ENCODE measurements at regions of chr11 and their contacts with region 1.

Region 1: GRCh38 chr11:122668562-122669090 is 13.1 kb downstream of the UBASH3B start:
- DNase-seq: peak; percentile 83
- H3K4me3 ChIP-seq: no peak overlapping the region
- H3K27ac ChIP-seq: no peak overlapping the region
- H3K4me1 ChIP-seq: peaks cover 16% of the 10 kb centered on the region
- H3K27me3 ChIP-seq: no peaks in the 10 kb centered on the region
- CTCF ChIP-seq: no peak

Region 2: GRCh38 chr11:122655527-122656072 is 13.0 kb before region 1 on chr11 and contains the start of gene UBASH3B:
- CTCF ChIA-PET with region 1: no interaction called
- POLR2A ChIA-PET with region 1: no interaction called
- intact Hi-C with region 1: no loop called
- DNase-seq: peak; percentile 91
- H3K4me3 ChIP-seq: peak within 1 kb of the TSS; percentile 95
- H3K27ac ChIP-seq: peak within 1 kb of the TSS; percentile 75
- H3K4me1 ChIP-seq: peaks cover 13% of the 10 kb centered on the region
- H3K27me3 ChIP-seq: no peaks in the 10 kb centered on the region
- CTCF ChIP-seq: 0 out of 2 replicates have a peak, but pooled peaks have one; percentile 19
- total RNA-seq, gene UBASH3B: 15.0 and 15.3 TPM in 2 replicates

Region 3: DNA sequence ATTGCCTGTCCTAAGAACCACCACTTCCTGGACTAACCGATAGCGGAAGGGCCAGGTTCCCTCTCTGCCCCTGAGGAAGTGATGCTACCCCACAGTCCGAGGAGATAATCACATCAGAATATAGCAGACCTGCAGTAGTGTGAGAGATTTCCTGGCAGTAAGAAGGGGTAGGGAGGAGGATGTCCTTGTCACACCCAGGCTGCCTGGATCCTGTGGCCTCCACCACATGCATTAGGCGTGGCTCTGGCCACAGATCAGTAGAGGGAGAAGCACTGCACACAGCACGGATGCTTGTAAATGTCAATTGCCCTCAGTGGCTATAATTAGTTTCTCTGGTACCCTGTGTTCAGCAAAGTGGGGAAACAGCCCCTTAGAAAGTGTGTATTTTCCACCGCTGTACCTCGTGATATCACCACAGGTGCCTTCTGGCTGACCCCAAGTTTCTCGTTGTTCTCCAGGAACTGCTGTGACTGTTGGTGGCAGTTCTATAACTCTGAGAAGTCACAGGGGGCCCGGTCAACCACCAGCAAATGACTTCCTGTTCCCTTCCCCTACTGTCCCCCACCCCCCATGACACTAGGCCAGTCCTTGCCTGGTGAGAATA is 48.7 kb after region 1 on chr11:
- CTCF ChIA-PET with region 1: no interaction called
- POLR2A ChIA-PET with region 1: no interaction called
- intact Hi-C with region 1: no loop called
- DNase-seq: no peak
- H3K4me3 ChIP-seq: no peak overlapping the region
- H3K27ac ChIP-seq: no peak overlapping the region
- H3K4me1 ChIP-seq: peaks cover 21% of the 10 kb centered on the region
- H3K27me3 ChIP-seq: no peaks in the 10 kb centered on the region
- CTCF ChIP-seq: no peak

Region 4: GRCh38 chr11:123062158-123062891 is 393.7 kb after region 1 on chr11:
- CTCF ChIA-PET with region 1: interaction called, 13 read pairs
- POLR2A ChIA-PET with region 1: no interaction called
- intact Hi-C with region 1: no loop called
- DNase-seq: peak; percentile 100
- H3K4me3 ChIP-seq: peak overlapping the region; percentile 83
- H3K27ac ChIP-seq: peak overlapping the region; percentile 100
- H3K4me1 ChIP-seq: peaks cover 52% of the 10 kb centered on the region
- H3K27me3 ChIP-seq: no peaks in the 10 kb centered on the region
- CTCF ChIP-seq: no peak

Measured in A673 (cell line).